Activated CD4-positive, alpha-beta T cell treated with anti-CD3 and anti-CD28 coated beads, Interleukin-2, amount 10 ng/mL, durations not matched to agents 24 days and 14 days (primary cell): ENCODE measurements at regions of chr17 and their contacts with region 1.

Region 1: DNA sequence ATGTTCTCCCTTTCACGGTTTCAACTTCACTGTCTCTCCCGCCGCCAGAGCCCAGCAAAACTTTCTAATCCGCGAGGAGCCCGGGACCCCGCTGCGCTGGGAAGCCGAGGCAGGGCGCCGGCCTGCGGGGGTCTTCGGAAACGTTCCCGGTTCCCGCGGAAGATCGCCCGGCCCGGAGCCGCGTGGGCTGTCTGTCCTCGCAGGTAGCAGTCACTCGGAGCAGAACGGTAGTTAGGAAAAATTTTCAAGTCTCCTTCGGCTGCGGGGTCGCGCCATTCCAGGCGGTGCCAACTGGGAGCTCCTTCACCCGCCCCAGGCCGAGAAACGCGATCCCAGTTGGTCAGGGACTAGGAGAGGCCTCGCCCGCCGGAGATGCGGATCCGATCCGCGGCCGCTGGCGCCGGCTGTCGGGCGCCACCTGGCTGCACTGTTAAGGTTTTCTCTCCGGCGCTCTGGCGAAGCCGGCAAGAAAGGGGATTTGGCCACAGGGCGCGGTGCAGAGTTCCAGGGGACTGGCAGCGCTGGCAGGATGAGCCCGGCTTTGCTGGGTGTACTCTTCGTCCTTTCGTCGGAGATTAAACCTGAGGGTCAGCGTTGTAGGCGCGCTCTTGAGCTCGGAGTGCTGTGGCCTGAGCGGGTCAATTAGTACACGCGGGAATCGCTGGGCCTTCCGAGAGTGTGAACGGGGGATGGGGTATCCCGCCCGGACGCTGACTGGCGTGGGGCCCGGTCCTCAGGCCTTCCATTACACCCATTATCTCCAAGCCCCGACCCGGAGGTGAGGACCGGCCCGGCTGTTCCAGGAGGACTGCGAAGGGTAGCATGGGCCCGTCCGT is 135.4 kb downstream of the KCNJ12 start:
- DNase-seq: peak; percentile 87
- H3K4me3 Mint-ChIP-seq: peak overlapping the region; percentile 76
- H3K27ac Mint-ChIP-seq: no peak overlapping the region
- H3K4me1 Mint-ChIP-seq: peaks cover 18% of the 10 kb centered on the region
- H3K27me3 Mint-ChIP-seq: peaks cover 46% of the 10 kb centered on the region

Region 2: DNA sequence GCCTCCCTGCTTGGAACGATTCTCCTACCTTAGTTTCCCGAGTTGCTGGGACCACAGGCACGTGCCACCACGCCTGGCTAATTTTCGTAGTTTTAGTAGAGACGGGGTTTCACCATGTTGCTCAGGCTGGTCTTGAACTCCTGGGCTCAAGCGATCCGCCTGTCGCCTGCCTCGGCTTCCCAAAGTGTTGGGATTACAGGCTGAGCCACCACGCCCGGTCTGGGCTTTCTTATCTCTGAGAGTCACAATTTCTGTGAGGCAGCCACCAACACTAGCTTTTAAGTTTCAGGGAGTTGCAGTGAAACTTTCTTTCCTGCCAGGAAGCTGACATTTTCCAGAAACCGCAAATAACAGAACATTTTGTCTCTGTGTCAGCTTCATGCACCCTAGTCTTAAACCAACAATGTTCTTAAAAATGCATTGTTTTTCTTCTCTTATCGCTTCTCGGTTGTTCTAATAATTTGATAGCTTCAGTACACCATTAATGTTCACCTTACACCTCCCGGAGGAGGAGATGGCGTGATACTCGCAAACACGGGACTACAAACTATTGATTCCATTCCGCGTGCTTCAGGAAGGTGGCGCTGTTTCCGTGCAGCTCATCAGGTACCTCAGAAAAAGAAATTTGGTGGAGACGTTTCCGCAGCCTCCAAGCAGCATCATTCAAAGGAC is 392.2 kb before region 1 on chr17:
- intact Hi-C with region 1: loop called (anchors 1 kb)
- DNase-seq: peak; percentile 90
- H3K4me3 Mint-ChIP-seq: no peak overlapping the region
- H3K27ac Mint-ChIP-seq: no peak overlapping the region
- H3K4me1 Mint-ChIP-seq: peaks cover 6% of the 10 kb centered on the region
- H3K27me3 Mint-ChIP-seq: peaks cover 7% of the 10 kb centered on the region

Region 3: DNA sequence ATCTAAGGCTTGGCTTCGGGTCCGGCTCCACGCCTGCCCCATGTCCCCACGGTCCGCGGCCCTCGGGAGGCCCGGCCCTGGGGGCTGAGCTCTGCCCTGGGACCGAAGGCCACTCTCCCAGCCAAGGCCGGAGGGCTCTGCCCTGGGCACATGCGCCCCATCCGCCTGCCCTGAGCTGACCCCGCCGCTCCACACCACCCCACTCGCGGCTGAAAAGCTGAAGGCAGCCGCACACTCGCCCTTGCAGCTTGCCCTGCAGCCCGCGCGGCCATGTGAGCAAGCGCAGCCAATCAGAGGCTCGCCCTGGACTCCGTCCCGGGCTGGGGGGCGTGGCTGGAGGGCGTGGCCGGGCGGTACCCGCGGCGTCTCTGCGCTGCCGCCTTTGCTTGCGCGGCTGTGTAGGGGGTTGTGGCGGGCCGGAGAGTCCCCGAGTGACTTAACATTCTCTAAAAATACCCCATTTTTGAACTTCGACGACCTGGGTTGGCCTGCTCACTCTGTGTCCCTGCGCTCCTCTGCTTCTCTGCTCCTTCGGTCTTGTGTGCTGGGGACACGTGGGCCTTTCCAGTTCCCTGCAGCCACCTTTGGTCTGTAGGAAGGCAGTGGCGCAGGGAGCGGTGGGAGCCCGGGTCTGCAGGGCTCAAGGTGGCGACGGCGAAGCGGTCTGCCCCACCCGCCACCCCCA is 235.9 kb before region 1 on chr17:
- intact Hi-C with region 1: loop called (anchors 1 kb)
- DNase-seq: peak; percentile 99
- H3K4me3 Mint-ChIP-seq: peak overlapping the region; percentile 74
- H3K27ac Mint-ChIP-seq: peak overlapping the region; percentile 85
- H3K4me1 Mint-ChIP-seq: peaks cover 33% of the 10 kb centered on the region
- H3K27me3 Mint-ChIP-seq: no peaks in the 10 kb centered on the region

Region 4: DNA sequence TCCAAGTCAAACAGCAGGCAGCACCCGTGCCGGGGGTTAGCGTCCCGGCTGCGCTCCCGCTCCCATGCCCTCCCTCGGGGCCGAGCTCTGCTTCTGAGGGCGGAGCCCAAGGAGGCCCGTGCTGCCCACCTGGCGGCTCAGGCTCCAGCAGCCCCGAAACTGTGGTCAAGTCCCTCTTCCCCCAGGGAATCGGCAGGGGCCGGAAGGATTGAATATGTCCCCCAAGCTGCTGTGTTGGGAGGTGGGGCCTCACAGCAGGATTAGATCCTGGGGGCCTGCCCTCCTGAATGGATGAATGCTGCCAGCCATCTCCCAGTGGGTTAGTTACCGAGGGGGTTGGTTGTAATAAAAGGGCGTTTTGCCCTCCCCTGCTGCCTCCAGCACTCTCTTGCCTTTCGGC is 193.1 kb before region 1 on chr17:
- intact Hi-C with region 1: loop called (anchors 2 kb)
- DNase-seq: no peak
- H3K4me3 Mint-ChIP-seq: no peak overlapping the region
- H3K27ac Mint-ChIP-seq: no peak overlapping the region
- H3K4me1 Mint-ChIP-seq: peaks cover 7% of the 10 kb centered on the region
- H3K27me3 Mint-ChIP-seq: peaks cover 2% of the 10 kb centered on the region

Region 5: DNA sequence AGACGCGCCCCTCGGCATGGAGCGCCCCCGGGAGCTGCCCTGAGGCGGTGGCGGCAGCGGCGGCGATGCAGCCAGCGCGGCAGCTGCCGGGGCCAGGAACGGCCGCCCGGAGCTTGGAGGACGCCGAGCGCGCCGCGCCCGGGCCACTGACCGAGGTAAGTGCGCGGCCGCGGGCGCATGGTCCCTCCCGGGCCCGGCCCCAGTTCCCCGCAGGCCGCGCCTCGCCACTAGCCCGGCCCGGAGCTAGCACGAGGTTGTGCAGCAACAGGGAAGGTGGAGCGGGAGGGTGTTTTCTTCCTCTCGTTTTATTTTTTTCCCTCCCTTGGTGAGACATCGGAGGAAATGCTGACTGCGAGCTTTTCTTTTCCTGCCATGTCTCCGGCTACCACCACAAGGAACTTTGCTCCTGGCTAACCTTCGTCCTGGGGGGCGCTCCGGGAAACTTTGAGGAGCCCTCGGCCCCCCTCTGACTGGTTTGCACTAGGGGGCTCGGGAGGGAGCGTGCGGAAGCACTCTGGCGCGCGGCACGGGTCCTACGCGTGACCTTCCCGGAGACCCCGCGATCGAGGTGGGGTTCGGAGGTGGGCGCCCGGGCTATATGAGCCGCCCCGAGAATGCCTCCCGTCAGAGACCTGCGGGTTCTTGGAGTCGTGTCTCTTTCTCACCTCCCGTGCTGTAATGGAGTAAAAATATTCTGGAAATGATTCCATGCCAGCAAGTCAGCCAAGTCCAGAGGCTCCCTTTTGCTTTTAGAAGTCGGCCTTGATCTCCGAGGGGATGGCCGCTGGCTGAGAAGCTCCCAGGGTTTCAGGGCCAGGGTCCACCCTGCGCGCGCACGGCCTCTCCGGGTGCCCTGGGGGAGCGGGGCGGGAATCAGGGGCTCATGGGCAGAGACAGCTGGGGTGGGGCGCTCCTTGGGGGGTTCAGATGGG is 134.6 kb before region 1 on chr17:
- intact Hi-C with region 1: loop called (anchors 5 kb)
- DNase-seq: no peak
- H3K4me3 Mint-ChIP-seq: no peak overlapping the region
- H3K27ac Mint-ChIP-seq: no peak overlapping the region
- H3K4me1 Mint-ChIP-seq: peaks cover 2% of the 10 kb centered on the region
- H3K27me3 Mint-ChIP-seq: peaks cover 22% of the 10 kb centered on the region

Region 6: GRCh38 chr17:21457051-21458026 is 54.2 kb before region 1 on chr17:
- intact Hi-C with region 1: loop called (anchors 1 kb)
- DNase-seq: peak; percentile 98
- H3K4me3 Mint-ChIP-seq: no peak overlapping the region
- H3K27ac Mint-ChIP-seq: no peak overlapping the region
- H3K4me1 Mint-ChIP-seq: peaks cover 13% of the 10 kb centered on the region
- H3K27me3 Mint-ChIP-seq: peaks cover 42% of the 10 kb centered on the region

Region 7: DNA sequence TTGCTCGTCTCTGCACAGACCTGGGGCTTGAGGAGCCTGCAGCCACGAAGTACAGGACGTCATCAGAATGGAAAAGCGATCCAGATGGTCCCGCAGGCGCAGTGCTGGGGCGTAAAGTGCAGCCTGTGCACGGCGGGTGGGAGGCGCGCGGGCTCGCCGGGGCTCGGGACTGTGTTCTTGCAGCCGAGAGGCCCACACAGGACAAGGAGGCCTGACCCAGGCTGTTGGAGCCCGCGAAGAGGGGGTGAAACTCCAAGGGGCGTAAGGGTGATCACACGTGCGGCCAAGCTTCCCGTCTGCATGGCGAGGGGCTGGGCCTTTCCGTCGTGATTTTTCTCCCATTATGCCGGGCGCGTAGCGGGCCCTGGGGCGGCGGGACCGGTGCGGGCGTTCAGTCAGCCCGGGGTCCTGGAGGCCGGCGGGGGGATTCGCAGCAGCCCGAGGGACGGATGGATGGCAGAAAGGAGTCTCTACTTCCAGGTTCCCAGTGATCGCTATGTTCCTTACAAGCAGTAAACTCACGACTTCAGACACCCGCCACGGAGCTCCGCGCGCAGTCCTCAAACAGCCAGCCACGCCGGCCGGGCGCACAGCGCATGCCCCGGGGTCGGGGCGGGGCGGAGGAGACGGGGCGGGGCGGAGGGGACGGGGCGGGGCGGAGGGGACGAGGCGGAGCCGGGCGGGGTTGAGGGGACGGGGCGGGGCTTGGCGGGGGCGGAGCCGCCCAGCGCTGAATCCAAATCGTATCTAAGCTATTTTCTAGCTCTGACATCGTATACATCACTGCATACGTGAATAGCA is 39.7 kb after region 1 on chr17:
- intact Hi-C with region 1: no loop called
- DNase-seq: peak; percentile 92
- H3K4me3 Mint-ChIP-seq: peak overlapping the region; percentile 92
- H3K27ac Mint-ChIP-seq: peak overlapping the region; percentile 65
- H3K4me1 Mint-ChIP-seq: peaks cover 24% of the 10 kb centered on the region
- H3K27me3 Mint-ChIP-seq: peaks cover 22% of the 10 kb centered on the region